ENCODE measurements at regions of chr16 and their contacts with region 1.

Region 1: DNA sequence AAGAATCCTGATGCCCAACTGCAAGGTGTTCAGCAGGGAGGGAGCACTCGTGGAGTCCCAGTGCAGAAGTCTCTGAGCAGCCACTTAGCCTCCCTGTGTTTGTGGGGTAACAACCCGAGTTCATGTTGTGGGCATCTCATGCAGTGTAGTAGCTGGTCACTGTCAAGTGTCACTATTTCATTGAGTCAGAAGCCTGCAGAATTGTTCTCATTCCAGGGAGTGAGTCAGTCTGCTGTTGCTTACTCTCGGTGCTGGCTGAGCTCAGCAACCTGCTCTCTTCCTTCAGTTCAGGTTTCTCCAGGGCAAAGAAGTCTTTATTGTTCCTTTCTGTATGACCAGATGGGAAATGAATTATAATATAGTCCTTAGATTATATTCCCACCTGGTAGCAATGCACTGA is 24.1 kb downstream of the HMOX2 start:
- DNase-seq: no peak
- ATAC-seq: no peak
- H3K4me3 Mint-ChIP-seq: no peak overlapping the region
- H3K27ac Mint-ChIP-seq: no peak overlapping the region
- H3K4me1 Mint-ChIP-seq: peaks cover 24% of the 10 kb centered on the region
- H3K27me3 Mint-ChIP-seq: no peaks in the 10 kb centered on the region; the same call in 1 of the 2 replicates
- CTCF ChIP-seq: no peak

Region 2: DNA sequence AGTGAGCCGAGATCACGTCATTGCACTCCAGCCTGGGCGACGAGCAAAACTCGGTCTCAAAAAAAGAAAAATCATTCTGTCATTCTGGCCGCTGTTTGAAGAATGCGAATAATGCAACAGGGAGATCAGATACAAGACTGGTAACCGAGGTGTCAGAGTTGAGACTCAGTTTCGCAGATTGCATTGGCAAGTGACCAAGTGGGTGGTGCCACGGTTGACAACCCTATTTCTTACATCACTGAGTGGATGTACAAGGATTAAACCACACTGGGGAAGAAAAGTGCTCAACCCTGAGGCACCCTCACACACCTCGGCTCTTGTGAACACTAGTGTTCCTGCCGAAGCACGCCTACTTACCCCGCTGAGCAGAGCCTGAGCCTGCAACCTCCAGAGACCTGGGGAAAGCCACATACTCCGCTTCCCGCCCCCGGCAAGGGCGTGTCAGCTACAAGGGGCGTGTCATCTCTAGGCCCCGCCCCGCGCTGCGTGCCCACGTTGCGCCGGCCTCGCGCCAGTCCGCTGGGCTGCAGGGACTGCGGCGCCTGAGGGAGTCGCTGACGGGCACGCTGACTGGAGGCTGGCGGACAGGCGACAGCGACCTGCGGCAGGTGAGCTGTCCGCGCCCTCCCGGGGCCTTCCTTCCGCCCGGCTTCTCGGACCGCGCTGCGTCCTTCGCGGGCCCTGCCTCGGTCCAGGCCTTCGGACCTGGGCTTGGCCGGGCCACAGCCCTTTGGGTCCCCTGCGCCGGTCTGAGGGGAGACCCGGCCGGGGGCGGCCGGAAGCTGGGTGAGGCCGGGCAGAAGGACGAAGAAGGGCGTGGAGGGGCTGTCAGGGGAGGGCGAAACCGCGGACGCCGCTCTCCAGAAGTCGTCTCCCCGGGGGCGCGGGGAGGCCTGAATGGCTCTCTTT is 24.1 kb before region 1 on chr16 and contains the start of gene HMOX2:
- CTCF ChIA-PET with region 1: interaction called, 11 read pairs
- POLR2A ChIA-PET with region 1: interaction called, 4 read pairs
- DNase-seq: peak; percentile 96
- ATAC-seq: peak; percentile 85
- H3K4me3 Mint-ChIP-seq: peak within 1 kb of the TSS; percentile 72
- H3K27ac Mint-ChIP-seq: peak within 1 kb of the TSS; percentile 97
- H3K4me1 Mint-ChIP-seq: peaks cover 19% of the 10 kb centered on the region
- H3K27me3 Mint-ChIP-seq: peaks cover 16% of the 10 kb centered on the region
- CTCF ChIP-seq: no peak
- total RNA-seq, gene HMOX2: 29.5 to 42.6 TPM (median 31.1 TPM) in 3 replicates

Region 3: DNA sequence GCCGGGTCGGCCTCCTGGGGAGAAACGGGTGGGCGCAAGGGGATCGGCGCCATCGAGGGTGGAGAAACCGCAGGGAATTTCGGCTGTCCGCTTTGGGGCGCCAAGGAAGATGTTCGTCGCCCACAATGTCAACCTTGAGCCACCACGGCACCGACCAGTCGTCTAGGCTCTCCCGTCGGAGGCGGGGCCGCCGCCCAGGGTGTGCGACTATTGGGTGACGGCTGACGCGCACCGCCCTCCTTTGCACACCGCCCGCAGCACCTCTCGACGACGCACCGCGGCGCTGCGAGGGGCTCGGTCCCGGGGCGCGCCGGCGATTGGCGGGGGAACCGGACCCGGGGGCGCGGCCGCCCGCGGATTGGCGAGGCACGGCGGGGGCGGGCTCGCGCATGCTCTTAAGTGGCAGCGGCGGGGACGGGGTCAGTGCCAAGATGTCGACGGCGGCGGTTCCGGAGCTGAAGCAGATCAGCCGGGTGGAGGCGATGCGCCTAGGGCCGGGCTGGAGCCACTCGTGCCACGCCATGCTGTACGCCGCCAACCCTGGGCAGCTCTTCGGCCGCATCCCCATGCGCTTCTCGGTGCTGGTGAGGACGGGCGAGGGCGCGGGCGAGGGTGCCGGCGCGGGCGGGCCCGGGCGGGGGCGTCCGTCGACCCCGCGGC is 193.2 kb after region 1 on chr16 and contains the start of gene NUDT16L1:
- CTCF ChIA-PET with region 1: no interaction called
- POLR2A ChIA-PET with region 1: no interaction called
- DNase-seq: peak; percentile 96
- ATAC-seq: peak; percentile 88
- H3K4me3 Mint-ChIP-seq: peak within 1 kb of the TSS; percentile 69
- H3K27ac Mint-ChIP-seq: peak within 1 kb of the TSS; percentile 19; the same call in 1 of the 2 replicates
- H3K4me1 Mint-ChIP-seq: no peaks in the 10 kb centered on the region
- H3K27me3 Mint-ChIP-seq: no peaks in the 10 kb centered on the region
- CTCF ChIP-seq: no peak
- total RNA-seq, gene NUDT16L1: 41.8 to 45.8 TPM (median 42.0 TPM) in 3 replicates